ENCODE measurements at regions of chr11 and their contacts with region 1.

Region 1: GRCh38 chr11:20609727-20610707 is 10.6 kb downstream of the SLC6A5 start:
- DNase-seq: peak; percentile 77 to 88
- ATAC-seq: peak; percentile 84
- H3K4me3 ChIP-seq: no peak overlapping the region
- H3K27ac ChIP-seq: no peak overlapping the region
- H3K4me1 ChIP-seq: no peaks in the 10 kb centered on the region
- H3K27me3 ChIP-seq: no peaks in the 10 kb centered on the region

Region 2: DNA sequence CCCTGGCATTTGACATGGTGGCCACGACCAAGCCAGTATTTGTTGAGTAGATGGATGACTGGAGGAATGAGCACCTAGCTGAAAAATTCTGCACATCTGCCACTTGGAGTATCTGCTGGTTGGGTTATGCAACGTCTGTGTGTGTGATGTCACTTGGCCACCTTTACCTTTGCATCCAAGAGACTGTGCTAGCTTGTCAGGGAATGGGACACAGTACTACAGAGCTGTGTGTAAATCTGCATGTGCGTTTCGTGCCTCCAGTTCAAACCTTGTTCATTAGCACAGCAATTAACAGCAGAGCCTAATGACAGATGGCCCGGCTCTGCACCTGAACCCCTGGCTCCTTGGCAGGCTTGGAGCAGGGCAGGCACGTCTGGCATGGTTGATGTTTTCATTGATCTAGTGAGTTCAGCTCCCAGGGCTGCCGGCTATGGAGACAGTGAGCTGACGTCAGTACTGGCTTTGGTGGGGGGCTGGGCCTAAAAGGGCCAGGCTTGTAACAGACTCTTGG is 1085.8 kb before region 1 on chr11:
- intact Hi-C with region 1: loop called in 1 of 2 experiments (anchors 10 kb)
- DNase-seq: no peak
- ATAC-seq: no peak
- H3K4me3 ChIP-seq: no peak overlapping the region
- H3K27ac ChIP-seq: no peak overlapping the region
- H3K4me1 ChIP-seq: no peaks in the 10 kb centered on the region
- H3K27me3 ChIP-seq: no peaks in the 10 kb centered on the region

Region 3: GRCh38 chr11:20387241-20388095 is 222.5 kb before region 1 on chr11 and contains the start of gene PRMT3:
- intact Hi-C with region 1: loop called (anchors 5 kb)
- DNase-seq: peak; percentile 97 to 99
- ATAC-seq: peak; percentile 99
- H3K4me3 ChIP-seq: peak within 1 kb of the TSS; percentile 44 to 77
- H3K27ac ChIP-seq: peak within 1 kb of the TSS in 1 of 2 donors; percentile 66
- H3K4me1 ChIP-seq: no peaks in the 10 kb centered on the region
- H3K27me3 ChIP-seq: no peaks in the 10 kb centered on the region
- total RNA-seq, gene PRMT3: 9.6 to 14.2 TPM

Measured in aorta (tissue), 5 donors.